OCI-LY7 (cell line): ENCODE measurements at regions of chr20 and their contacts with region 1.

Region 1: DNA sequence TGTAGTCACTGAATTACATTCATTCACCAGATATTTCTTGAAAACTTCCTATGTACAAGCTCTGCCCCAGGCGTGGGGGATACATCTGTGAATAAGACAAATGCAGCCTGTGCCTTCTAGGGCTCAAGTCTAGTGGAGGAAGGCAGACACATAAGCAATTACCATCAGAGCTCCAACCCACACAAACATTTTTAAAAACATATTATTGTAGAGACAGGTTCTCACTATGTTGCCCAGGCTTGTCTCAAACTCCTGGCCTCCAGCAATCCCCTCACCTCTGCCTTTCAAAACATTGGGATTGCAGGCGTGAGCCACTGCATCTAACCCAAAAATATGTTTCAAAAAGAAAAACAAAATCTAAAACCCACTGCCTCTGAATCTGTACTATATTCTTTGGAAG is 9.8 kb upstream of the TRPC4AP start:
- DNase-seq: no peak
- H3K4me3 ChIP-seq: no peak overlapping the region
- H3K27ac ChIP-seq: no peak overlapping the region
- H3K4me1 ChIP-seq: no peaks in the 10 kb centered on the region
- CTCF ChIP-seq: no peak

Region 2: DNA sequence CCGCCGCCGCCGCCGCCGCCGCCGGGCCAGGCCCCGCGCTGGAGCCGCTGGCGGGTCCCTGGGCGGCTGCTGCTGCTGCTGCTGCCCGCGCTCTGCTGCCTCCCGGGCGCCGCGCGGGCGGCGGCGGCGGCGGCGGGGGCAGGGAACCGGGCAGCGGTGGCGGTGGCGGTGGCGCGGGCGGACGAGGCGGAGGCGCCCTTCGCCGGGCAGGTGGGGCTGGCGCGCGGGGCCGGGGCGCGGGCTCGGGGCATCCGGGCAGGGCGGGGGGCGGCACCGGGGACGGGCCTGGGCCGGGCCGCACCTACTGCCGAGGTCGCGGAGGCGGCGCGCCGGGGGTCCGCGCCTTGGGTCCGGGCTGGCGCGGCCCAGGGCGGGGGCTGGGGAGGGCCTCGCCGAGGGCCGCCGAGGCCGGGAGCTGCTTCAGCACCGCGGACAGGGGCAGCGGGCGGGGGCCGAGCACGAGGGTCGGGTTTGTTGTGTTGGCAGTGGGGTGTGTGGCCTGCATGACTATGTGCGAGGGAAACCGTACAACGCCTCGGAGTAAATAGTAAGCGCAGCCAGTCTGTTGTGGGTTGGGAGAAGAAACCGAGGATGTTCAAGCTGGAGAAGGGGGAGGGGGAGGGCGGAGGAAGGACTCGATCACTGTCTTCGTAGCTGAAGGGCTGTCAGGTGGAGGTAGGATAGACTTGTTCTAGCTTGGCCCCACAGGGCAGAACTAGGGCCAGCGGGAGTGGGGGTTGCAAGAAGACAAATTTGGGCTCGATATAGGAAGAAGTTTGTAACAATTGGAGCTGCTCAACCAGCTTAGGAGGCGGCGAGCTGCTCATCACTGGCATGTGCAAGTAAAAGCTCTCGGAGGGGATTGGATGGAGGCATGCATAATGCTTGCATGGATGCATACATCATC is 124.6 kb after region 1 on chr20:
- CTCF ChIA-PET with region 1: interaction called, 12 read pairs
- POLR2A ChIA-PET with region 1: no interaction called
- intact Hi-C with region 1: no loop called
- DNase-seq: peak; percentile 10
- H3K4me3 ChIP-seq: no peak overlapping the region
- H3K27ac ChIP-seq: no peak overlapping the region
- H3K4me1 ChIP-seq: no peaks in the 10 kb centered on the region
- CTCF ChIP-seq: no peak